Gastrocnemius medialis (tissue), 4 donors: ENCODE measurements at regions of chr4 and their contacts with region 1.

Region 1: GRCh38 chr4:64407000-64407399 is 2.2 kb downstream of the TECRL start:
- DNase-seq: no peak
- ATAC-seq: no peak
- H3K4me3 ChIP-seq: peak overlapping the region; percentile 11 to 44 (median 18)
- H3K27ac ChIP-seq: peak overlapping the region; percentile 38 to 79 (median 75)
- H3K4me1 ChIP-seq: peaks cover 0 to 19% of the 10 kb centered on the region in 2 donors
- H3K27me3 ChIP-seq: no peaks in the 10 kb centered on the region
- CTCF ChIP-seq: no peak
- POLR2A ChIP-seq: no peak

Region 2: DNA sequence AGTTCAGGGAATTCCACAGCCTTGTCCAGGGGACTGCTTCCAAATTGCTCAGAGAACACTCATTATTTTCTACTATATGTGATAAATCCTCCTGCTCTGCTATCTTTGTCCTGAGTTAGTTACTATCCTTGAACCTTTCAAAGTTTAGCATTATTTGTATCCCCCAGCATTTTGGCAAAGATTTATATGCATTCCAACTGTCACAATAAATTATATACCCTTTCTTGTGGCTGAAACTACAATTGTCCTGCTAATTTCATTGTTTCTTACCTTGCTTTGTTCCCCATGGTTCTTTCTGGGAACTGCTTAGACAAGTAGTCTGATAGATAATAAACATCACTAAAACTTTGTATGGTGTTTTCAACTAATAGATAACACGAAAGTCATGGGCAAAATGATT is 38.3 kb before region 1 on chr4:
- in situ Hi-C with region 1: no loop called
- intact Hi-C with region 1: loop called (anchors 5 kb)
- DNase-seq: no peak
- ATAC-seq: no peak
- H3K4me3 ChIP-seq: no peak overlapping the region
- H3K27ac ChIP-seq: peak overlapping the region in 1 of 4 donors; percentile 48
- H3K4me1 ChIP-seq: no peaks in the 10 kb centered on the region
- H3K27me3 ChIP-seq: no peaks in the 10 kb centered on the region
- CTCF ChIP-seq: no peak
- POLR2A ChIP-seq: no peak